ENCODE measurements at regions of chr17 and their contacts with region 1.

Region 1: GRCh38 chr17:74987418-74987908 is at the start of gene CDR2L:
- DNase-seq: peak; percentile 90 to 99
- H3K4me3 ChIP-seq: peak within 1 kb of the TSS; percentile 82 to 95
- H3K27ac ChIP-seq: peak within 1 kb of the TSS; percentile 98 to 99
- H3K4me1 ChIP-seq: peaks cover 3 to 9% of the 10 kb centered on the region in 2 donors
- H3K27me3 ChIP-seq: no peaks in the 10 kb centered on the region
- CTCF ChIP-seq: no peak
- total RNA-seq, gene CDR2L: 54.7 TPM

Region 2: DNA sequence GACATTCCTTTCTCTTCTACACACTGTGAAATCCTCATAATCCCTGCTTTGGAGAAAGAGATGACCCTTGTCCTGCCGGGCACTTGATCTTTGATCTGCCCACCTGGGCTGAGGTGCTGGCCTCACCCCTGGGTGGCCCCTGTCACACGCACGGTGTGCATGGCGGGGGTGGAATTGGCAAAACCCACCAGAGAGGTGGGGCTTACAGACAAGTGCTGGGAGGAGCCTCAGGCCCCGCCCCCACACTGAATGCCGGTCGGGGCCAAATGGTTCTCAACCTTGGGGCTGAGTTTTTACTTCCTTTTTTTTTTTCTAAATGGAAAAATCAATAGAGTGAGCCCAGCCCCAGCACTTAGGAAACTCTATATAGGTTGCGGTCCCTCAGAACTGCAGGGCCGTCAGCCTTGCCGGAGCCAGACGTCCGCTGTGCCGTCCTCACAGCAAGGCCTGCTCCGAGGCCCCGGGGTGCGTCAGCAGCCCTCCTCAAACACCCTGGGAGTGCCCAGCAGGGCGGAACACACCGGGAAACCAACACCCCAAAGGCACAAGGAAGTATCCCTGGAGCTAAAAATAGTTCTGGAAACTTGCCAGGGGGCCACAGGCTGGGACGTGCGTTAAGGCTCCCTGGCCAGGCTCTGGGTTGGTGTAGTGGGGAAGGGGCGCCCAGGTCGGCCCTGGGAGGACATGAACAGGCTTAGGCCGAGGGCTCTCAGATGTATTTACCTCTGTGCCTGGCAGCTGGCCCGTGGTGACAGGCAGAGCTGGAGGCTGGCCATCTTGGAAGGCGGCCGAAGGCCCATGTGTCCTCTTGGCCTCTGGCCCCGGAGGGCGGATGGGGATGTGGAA is 544.6 kb before region 1 on chr17:
- intact Hi-C with region 1: loop called (anchors 10 kb)
- DNase-seq: peak; percentile 69 to 90
- H3K4me3 ChIP-seq: peak overlapping the region; percentile 14 to 49
- H3K27ac ChIP-seq: peak overlapping the region; percentile 94 to 98
- H3K4me1 ChIP-seq: peaks cover 23 to 58% of the 10 kb centered on the region in 2 donors
- H3K27me3 ChIP-seq: no peaks in the 10 kb centered on the region
- CTCF ChIP-seq: no peak

Region 3: DNA sequence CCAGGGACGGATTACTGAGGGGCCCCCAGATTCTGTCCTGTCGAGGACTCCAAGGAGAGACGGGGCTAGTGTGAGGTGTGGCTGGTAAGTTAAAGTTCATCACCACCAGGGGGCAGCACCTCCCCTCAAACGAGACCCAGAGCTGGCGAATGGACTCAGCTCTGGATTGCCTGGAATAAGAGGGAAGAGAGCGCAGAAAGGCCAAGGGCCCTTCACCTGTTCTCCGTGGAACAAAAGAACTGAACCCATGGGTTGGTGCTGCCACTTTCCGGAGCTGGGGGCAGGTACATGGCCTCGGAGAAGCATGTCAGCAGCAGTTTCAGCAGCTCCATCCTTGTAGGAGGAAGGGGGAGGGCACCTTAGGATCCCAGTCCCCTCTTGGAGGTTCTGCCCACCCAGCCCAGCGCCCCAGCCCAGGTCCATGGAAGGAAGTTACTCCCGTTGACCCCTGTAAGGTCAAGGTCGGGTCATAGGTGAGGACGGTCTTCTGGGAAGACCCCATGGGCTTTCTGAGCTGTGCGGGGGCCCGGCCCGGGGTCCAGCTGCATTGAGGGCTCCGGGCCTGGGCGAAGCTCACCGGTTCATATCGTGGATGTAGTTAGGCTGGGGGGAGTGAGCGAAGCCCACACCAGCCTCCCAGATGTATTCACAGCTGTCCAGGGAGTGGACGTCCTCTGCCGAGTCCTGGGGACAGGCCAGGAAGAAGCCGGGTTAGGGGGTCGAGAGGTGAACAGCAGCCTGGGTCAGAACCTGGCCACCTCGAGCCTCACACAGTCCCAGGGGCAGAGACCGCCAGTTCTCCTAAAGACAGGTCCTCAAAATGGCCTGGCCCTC is 25.6 kb before region 1 on chr17:
- intact Hi-C with region 1: loop called (anchors 1 kb)
- DNase-seq: peak in 1 of 2 donors; percentile 91
- H3K4me3 ChIP-seq: no peak overlapping the region
- H3K27ac ChIP-seq: no peak overlapping the region
- H3K4me1 ChIP-seq: no peaks in the 10 kb centered on the region
- H3K27me3 ChIP-seq: no peaks in the 10 kb centered on the region
- CTCF ChIP-seq: peak; percentile 53 to 84 (median 77)

Region 4: GRCh38 chr17:75012346-75013091 is 25.1 kb after region 1 on chr17 and contains the start of gene MRPL58:
- intact Hi-C with region 1: loop called (anchors 1 kb)
- DNase-seq: peak in 1 of 2 donors; percentile 89
- H3K4me3 ChIP-seq: peak within 1 kb of the TSS; percentile 68 to 88
- H3K27ac ChIP-seq: peak within 1 kb of the TSS; percentile 83 to 91
- H3K4me1 ChIP-seq: peaks cover 4 to 18% of the 10 kb centered on the region in 2 donors
- H3K27me3 ChIP-seq: no peaks in the 10 kb centered on the region
- CTCF ChIP-seq: peak; percentile 59 to 66 (median 63)
- total RNA-seq, gene MRPL58: 14.5 TPM

Region 5: DNA sequence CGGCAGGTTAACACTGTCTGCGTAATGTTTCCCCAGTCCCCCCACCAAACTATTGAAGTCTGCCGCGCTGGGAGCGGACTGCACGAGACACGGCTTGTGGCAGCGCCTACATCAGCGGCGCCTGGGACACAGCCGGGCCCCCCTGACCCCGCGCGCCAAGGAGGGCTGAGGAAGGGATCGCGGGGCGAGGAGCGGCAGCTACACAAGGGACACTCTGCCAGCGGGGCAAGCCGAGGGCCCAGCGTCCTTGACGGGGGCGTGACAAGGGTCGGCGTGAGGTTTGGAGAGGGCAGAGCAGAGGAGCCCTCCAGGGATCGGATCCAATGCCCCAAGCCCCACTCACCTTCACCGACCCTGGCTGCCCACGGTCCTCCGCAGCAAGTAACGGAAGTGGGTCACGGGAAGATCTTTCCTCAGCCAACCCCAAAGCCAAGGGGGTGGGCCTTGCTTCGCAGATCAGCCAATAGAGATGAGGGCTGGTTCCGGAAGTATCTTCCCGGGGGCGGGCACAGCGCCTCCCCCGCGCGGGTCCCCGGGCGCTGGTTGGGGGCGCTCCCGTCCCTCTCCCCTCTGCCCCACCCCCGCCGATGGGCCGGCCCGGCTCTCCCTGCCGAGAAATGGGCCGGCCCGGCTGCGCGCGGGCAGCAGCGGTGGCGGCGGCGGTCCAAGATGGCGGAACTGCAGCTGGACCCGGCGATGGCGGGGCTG is 59.3 kb after region 1 on chr17 and contains the starts of genes ATP5PD and KCTD2:
- intact Hi-C with region 1: loop called (anchors 1 kb)
- DNase-seq: peak; percentile 88 to 98
- H3K4me3 ChIP-seq: peak within 1 kb of the TSS; percentile 64 to 74
- H3K27ac ChIP-seq: peak within 1 kb of the TSS; percentile 90
- H3K4me1 ChIP-seq: peaks cover 9 to 13% of the 10 kb centered on the region in 2 donors
- H3K27me3 ChIP-seq: no peaks in the 10 kb centered on the region
- CTCF ChIP-seq: no peak
- total RNA-seq, gene ATP5PD: 133 TPM
- total RNA-seq, gene KCTD2: 31.4 TPM